CD4-positive, alpha-beta T cell (primary cell): ENCODE measurements at regions of chr1 and their contacts with region 1.

Region 1: GRCh38 chr1:207828485-207829158 is 76.8 kb downstream of the CD46 start:
- DNase-seq: peak; percentile 29 to 87 (median 58)
- ATAC-seq: peak; percentile 22
- H3K4me3 ChIP-seq: no peak overlapping the region
- H3K4me3 Mint-ChIP-seq: no peak overlapping the region
- H3K27ac ChIP-seq: peak overlapping the region in 1 of 2 donors; percentile 7
- H3K27ac Mint-ChIP-seq: peak overlapping the region; percentile 95
- H3K4me1 ChIP-seq: peaks cover 75% of the 10 kb centered on the region
- H3K4me1 Mint-ChIP-seq: peaks cover 96% of the 10 kb centered on the region
- H3K27me3 ChIP-seq: no peaks in the 10 kb centered on the region
- H3K27me3 Mint-ChIP-seq: peaks cover 5% of the 10 kb centered on the region
- CTCF ChIP-seq: peak; percentile 66

Region 2: GRCh38 chr1:207751790-207752455 is 76.7 kb before region 1 on chr1 and contains the start of gene CD46:
- CTCF ChIA-PET with region 1: interaction called, 3 read pairs
- POLR2A ChIA-PET with region 1: interaction called, 11 read pairs
- intact Hi-C with region 1: no loop called
- DNase-seq: peak; percentile 85 to 97 (median 92)
- ATAC-seq: peak; percentile 95
- H3K4me3 ChIP-seq: peak within 1 kb of the TSS; percentile 97
- H3K4me3 Mint-ChIP-seq: peak within 1 kb of the TSS; percentile 95
- H3K27ac ChIP-seq: peak within 1 kb of the TSS; percentile 66 to 85
- H3K27ac Mint-ChIP-seq: peak within 1 kb of the TSS; percentile 89
- H3K4me1 ChIP-seq: peaks cover 35% of the 10 kb centered on the region
- H3K4me1 Mint-ChIP-seq: peaks cover 84% of the 10 kb centered on the region
- H3K27me3 ChIP-seq: no peaks in the 10 kb centered on the region
- H3K27me3 Mint-ChIP-seq: no peaks in the 10 kb centered on the region
- CTCF ChIP-seq: no peak
- total RNA-seq, gene CD46: 111 to 115 TPM

Region 3: DNA sequence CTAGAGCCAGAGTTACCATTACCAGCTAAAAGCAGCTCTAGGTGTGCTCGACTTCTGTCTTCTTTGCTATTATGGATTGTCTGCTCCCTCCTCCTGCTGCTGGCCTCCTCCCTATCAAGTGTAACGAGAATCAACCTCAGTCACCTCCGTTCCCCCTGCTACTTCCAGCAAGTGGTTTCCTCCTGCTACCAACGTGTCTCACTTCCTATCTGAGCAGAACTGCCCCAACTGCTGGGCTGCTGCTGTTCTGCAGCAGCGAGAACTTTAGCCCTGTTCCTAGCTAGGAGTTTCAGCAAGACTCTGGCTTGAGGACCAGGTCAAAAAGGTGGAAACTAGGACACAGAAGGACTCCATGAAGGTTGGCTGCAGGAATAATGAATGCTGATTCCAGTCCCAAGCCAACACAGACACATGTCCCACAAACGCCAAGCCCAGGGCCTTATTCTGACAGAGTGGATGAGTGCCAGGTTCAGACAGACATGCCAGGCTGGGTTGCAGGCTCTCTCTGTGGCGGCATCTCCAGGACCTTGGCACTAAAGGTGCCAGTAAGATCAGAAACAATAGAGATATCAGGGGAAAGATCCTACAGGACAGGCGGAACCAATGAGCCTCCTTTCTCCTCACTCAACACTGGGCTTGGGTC is 35.4 kb after region 1 on chr1:
- CTCF ChIA-PET with region 1: interaction called, 131 read pairs
- POLR2A ChIA-PET with region 1: interaction called, 158 read pairs
- intact Hi-C with region 1: loop called (anchors 1 kb)
- DNase-seq: peak in 12 of 14 experiments; percentile 37 to 78 (median 44)
- ATAC-seq: peak; percentile 55
- H3K4me3 ChIP-seq: no peak overlapping the region
- H3K4me3 Mint-ChIP-seq: peak overlapping the region; percentile 95
- H3K27ac ChIP-seq: peak overlapping the region; percentile 13 to 47
- H3K27ac Mint-ChIP-seq: peak overlapping the region; percentile 95
- H3K4me1 ChIP-seq: peaks cover 75% of the 10 kb centered on the region
- H3K4me1 Mint-ChIP-seq: peaks cover 67% of the 10 kb centered on the region
- H3K27me3 ChIP-seq: no peaks in the 10 kb centered on the region
- H3K27me3 Mint-ChIP-seq: no peaks in the 10 kb centered on the region
- CTCF ChIP-seq: no peak

Region 4: GRCh38 chr1:207876131-207876530 is 47.5 kb after region 1 on chr1:
- CTCF ChIA-PET with region 1: interaction called, 131 read pairs
- POLR2A ChIA-PET with region 1: interaction called, 158 read pairs
- intact Hi-C with region 1: no loop called
- DNase-seq: no peak
- ATAC-seq: no peak
- H3K4me3 ChIP-seq: no peak overlapping the region
- H3K4me3 Mint-ChIP-seq: no peak overlapping the region
- H3K27ac ChIP-seq: no peak overlapping the region
- H3K27ac Mint-ChIP-seq: peak overlapping the region; percentile 36
- H3K4me1 ChIP-seq: peaks cover 43% of the 10 kb centered on the region
- H3K4me1 Mint-ChIP-seq: peaks cover 58% of the 10 kb centered on the region
- H3K27me3 ChIP-seq: no peaks in the 10 kb centered on the region
- H3K27me3 Mint-ChIP-seq: no peaks in the 10 kb centered on the region
- CTCF ChIP-seq: no peak

Region 5: DNA sequence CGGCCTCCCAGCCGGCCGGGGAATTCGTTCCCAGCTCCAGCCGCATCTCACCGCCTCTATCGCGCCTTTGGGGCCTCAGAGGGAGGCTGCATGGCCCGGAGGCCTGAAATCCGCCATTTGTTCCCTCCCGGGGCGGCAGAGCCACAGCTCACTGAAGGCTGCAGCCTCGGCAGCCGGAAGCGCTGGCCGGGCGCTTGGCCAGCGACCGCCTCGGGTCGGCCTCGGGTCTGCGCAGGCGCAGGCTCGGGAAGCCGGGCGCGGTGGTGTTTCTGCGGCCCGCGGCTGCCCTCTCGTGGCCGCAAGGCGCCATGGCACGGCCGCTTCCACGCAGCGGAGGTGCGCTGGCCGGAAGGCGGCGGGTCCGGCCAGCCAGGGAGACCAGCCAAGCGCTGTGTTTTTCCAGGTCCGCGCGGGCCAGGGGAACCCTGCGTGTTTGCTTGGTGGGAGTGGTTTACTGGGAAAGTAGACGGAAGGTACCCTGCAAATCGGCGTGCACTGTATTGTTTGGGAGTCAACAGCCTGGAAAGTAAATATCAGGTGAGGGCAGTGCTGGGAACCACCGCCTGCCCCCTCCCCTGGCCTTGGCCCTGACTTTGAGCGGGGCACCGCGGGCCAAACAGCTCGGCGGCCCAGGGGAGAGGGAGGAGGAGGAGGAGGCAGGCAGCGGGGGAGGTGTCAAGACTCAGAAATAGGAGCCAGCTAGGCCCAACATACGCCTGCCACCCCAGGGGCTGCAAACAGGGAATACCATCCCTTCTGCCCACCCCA is 135.0 kb after region 1 on chr1:
- CTCF ChIA-PET with region 1: interaction called, 20 read pairs
- POLR2A ChIA-PET with region 1: interaction called, 14 read pairs
- intact Hi-C with region 1: loop called (anchors 1 kb)
- DNase-seq: peak; percentile 61 to 92 (median 79)
- ATAC-seq: peak; percentile 90
- H3K4me3 ChIP-seq: peak overlapping the region; percentile 86
- H3K4me3 Mint-ChIP-seq: peak overlapping the region; percentile 79
- H3K27ac ChIP-seq: no peak overlapping the region
- H3K27ac Mint-ChIP-seq: no peak overlapping the region
- H3K4me1 ChIP-seq: peaks cover 23% of the 10 kb centered on the region
- H3K4me1 Mint-ChIP-seq: peaks cover 8% of the 10 kb centered on the region
- H3K27me3 ChIP-seq: peaks cover 15 to 27% of the 10 kb centered on the region in 2 experiments
- H3K27me3 Mint-ChIP-seq: peaks cover 31% of the 10 kb centered on the region
- CTCF ChIP-seq: peak; percentile 97